Endothelial cell of umbilical vein (primary cell): ENCODE measurements at regions of chr1 and their contacts with region 1.

Region 1: DNA sequence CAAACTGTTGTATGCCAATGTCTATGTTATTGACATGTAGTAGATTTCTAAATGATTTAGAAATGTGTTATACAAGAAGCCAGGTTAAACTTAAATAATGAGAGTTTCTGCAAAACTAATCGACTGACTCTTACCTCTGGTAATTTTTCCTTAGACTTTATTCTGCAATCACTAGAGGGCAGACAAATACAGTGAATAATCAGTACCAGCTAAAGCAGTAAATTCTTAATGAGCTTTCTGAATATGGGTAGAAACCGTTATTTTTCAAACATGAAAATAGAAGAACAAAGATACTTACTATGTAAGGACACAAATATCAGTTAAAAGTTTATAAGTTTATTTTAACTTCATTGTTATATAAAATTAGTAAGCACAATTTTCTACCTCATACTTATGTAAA is 97.9 kb upstream of the RGS1 start:
- DNase-seq: peak; percentile 65
- H3K4me3 ChIP-seq: no peak overlapping the region
- H3K27ac ChIP-seq: no peak overlapping the region
- H3K4me1 ChIP-seq: no peaks in the 10 kb centered on the region
- H3K27me3 ChIP-seq: no peaks in the 10 kb centered on the region
- CTCF ChIP-seq: peak; percentile 14 to 30
- POLR2A ChIP-seq: no peak

Region 2: DNA sequence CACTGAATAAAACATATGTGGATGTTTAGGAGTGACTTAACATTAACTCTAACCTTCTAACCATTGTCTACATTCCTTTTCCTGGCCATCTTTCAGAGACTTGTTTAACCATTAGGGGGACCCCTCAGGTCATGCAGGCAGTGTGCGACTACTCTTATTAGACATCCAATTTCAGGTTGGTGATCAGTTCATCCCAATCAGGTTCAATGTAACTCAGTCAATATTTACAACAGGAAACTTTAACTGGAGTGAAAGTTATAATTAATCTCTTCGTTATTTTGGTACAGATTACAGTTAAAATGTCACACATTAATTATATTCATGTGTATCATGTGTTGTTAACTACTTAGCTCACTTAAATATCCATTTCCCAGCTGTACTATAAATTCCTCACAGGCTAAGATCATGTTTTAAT is 29.1 kb after region 1 on chr1:
- CTCF ChIA-PET with region 1: interaction called, 18 read pairs
- POLR2A ChIA-PET with region 1: no interaction called
- dilution Hi-C with region 1: no loop called
- intact Hi-C with region 1: no loop called
- DNase-seq: peak; percentile 72
- H3K4me3 ChIP-seq: no peak overlapping the region
- H3K27ac ChIP-seq: no peak overlapping the region
- H3K4me1 ChIP-seq: no peaks in the 10 kb centered on the region
- H3K27me3 ChIP-seq: no peaks in the 10 kb centered on the region
- CTCF ChIP-seq: peak; percentile 19 to 38
- POLR2A ChIP-seq: no peak

Region 3: GRCh38 chr1:192545896-192546521 is 68.4 kb after region 1 on chr1:
- CTCF ChIA-PET with region 1: interaction called, 19 read pairs
- POLR2A ChIA-PET with region 1: no interaction called
- dilution Hi-C with region 1: no loop called
- intact Hi-C with region 1: no loop called
- DNase-seq: peak; percentile 34
- H3K4me3 ChIP-seq: no peak overlapping the region
- H3K27ac ChIP-seq: peak overlapping the region; percentile 40
- H3K4me1 ChIP-seq: peaks cover 38% of the 10 kb centered on the region
- H3K27me3 ChIP-seq: no peaks in the 10 kb centered on the region
- CTCF ChIP-seq: peak in 1 of 2 donors; percentile 8
- POLR2A ChIP-seq: no peak

Region 4: DNA sequence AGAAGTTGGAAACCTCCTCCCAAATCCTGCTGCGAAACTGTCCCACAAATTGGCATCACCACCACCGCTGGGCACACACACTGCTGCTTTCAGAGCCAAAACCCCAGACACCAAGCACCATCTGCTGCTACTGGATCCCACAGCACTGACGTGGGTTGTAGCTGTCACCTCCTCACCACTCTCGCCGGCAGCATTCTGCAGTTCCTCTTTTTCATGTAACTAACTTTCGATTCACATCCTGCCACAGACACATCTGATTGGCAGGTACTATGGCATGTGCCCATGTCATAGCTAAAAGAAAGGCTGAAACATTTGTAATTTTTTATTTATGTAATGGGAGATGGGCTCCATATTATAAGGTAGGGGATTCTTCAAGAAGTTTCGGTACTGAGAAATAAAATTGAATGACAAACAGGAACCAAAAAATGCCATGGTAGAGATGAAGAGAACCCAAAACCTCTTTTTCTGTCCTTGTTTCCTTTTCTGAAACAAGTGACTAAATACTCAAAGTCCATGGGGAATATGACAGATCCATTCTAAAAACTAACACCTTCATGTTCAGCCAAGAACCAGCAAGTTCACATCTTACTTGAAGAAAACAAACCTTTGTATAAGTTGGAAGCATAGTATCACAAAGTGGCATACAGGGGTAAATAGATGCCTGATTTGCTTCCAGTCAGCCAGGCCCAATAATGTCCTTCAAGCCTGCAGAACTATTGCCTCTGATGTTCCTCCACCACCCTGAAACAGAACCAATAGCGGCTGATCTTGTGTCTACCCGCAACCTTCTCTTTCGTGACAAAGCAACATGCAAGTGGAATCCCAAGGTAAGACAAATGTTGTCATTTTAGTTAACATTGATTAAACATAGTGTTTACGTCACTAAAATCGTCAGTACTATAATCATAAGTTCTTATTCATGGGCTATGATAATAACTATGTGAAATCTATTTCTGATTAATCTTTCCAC is 131.8 kb after region 1 on chr1:
- CTCF ChIA-PET with region 1: interaction called, 283 read pairs
- POLR2A ChIA-PET with region 1: interaction called, 4 read pairs
- dilution Hi-C with region 1: no loop called
- intact Hi-C with region 1: loop called (anchors 1 kb)
- DNase-seq: no peak
- H3K4me3 ChIP-seq: no peak overlapping the region
- H3K27ac ChIP-seq: no peak overlapping the region
- H3K4me1 ChIP-seq: no peaks in the 10 kb centered on the region
- H3K27me3 ChIP-seq: no peaks in the 10 kb centered on the region
- CTCF ChIP-seq: no peak
- POLR2A ChIP-seq: no peak

Region 5: GRCh38 chr1:193019442-193020026 is 541.9 kb after region 1 on chr1:
- CTCF ChIA-PET with region 1: interaction called, 163 read pairs
- POLR2A ChIA-PET with region 1: no interaction called
- dilution Hi-C with region 1: no loop called
- intact Hi-C with region 1: loop called (anchors 1 kb)
- DNase-seq: peak; percentile 76
- H3K4me3 ChIP-seq: no peak overlapping the region
- H3K27ac ChIP-seq: no peak overlapping the region
- H3K4me1 ChIP-seq: peaks cover 4% of the 10 kb centered on the region
- H3K27me3 ChIP-seq: no peaks in the 10 kb centered on the region
- CTCF ChIP-seq: peak; percentile 12 to 19
- POLR2A ChIP-seq: no peak

Region 6: GRCh38 chr1:193121616-193122593 is 644.3 kb after region 1 on chr1 and contains the start of gene CDC73:
- CTCF ChIA-PET with region 1: interaction called, 13 read pairs
- POLR2A ChIA-PET with region 1: no interaction called
- dilution Hi-C with region 1: no loop called
- intact Hi-C with region 1: loop called (anchors 1 kb)
- DNase-seq: peak; percentile 97
- H3K4me3 ChIP-seq: peak within 1 kb of the TSS; percentile 77 to 96 (median 86)
- H3K27ac ChIP-seq: peak within 1 kb of the TSS; percentile 61
- H3K4me1 ChIP-seq: peaks cover 20% of the 10 kb centered on the region
- H3K27me3 ChIP-seq: no peaks in the 10 kb centered on the region
- CTCF ChIP-seq: peak; percentile 95 to 98
- POLR2A ChIP-seq: peak; percentile 70
- total RNA-seq, gene CDC73: 55.3 and 55.8 TPM in 2 replicates